Lower leg skin (tissue), 4 donors: ENCODE measurements at regions of chr1 and their contacts with region 1.

Region 1: GRCh38 chr1:18907021-18907916 is 4.9 kb upstream of the ALDH4A1 start:
- DNase-seq: no peak
- H3K4me3 ChIP-seq: no peak overlapping the region
- CTCF ChIP-seq: peak in 1 of 3 donors; percentile 59
- POLR2A ChIP-seq: no peak

Region 2: GRCh38 chr1:19087737-19088594 is 180.7 kb after region 1 on chr1:
- intact Hi-C with region 1: loop called (anchors 5 kb)
- DNase-seq: no peak
- H3K4me3 ChIP-seq: no peak overlapping the region
- CTCF ChIP-seq: no peak
- POLR2A ChIP-seq: no peak